ENCODE measurements at regions of chr1 and their contacts with region 1.

Region 1: GRCh38 chr1:173476664-173477285 is 360 bp upstream of the PRDX6 start:
- DNase-seq: peak; percentile 77 to 90 (median 84)
- H3K4me3 ChIP-seq: peak overlapping the region; percentile 93
- H3K4me3 Mint-ChIP-seq: peak overlapping the region; percentile 89 to 94 (median 91)
- H3K27ac ChIP-seq: peak overlapping the region; percentile 89
- H3K27ac Mint-ChIP-seq: peak overlapping the region; percentile 89 to 95 (median 91)
- H3K4me1 ChIP-seq: peaks cover 61% of the 10 kb centered on the region
- H3K4me1 Mint-ChIP-seq: peaks cover 38 to 68% (median 55%) of the 10 kb centered on the region in 4 donors
- H3K27me3 ChIP-seq: no peaks in the 10 kb centered on the region
- H3K27me3 Mint-ChIP-seq: no peaks in the 10 kb centered on the region

Region 2: DNA sequence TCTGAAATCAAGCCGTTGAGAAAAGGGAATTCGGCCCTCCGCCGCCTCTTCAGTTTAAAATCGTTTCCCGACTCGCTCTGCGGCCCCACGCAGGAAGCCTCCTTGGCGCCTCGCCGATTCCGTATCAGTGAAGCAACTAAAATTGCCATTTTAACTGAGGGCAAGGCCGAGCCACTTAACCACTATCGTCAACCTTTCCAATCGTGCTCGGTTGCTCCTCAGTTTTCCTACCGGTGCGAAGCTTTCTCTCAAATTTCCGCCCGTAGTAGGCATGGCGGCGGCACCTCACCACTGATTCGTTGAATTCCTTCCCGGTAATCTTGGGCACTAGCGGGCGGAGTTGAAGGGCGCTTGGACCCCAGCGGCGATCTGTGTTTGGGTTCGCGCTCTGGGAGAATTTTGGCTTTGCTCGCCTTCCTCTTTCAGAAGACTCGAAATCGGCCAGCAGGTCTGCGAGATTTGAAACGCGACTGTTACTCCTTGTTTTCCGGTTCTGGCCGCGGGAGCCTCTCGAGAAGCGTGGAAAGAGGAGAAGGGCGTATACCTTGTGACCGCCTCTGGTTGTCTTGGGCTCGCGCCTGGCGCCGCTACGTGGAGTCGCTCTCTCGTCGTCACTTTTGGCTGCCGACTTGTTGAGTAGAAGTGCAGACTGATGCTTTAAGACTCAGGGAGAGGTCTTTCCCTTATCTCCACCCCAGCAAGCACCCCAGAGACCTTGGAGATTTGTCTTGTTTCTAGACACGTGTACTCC is 347.7 kb after region 1 on chr1 and contains the starts of genes CENPL and DARS2:
- CTCF ChIA-PET with region 1: interaction called, 4 read pairs
- POLR2A ChIA-PET with region 1: interaction called, 20 read pairs
- intact Hi-C with region 1: no loop called
- DNase-seq: peak; percentile 92 to 96 (median 93)
- H3K4me3 ChIP-seq: peak within 1 kb of the TSS; percentile 93 to 95
- H3K4me3 Mint-ChIP-seq: peak within 1 kb of the TSS; percentile 93 to 99 (median 97)
- H3K27ac ChIP-seq: peak within 1 kb of the TSS; percentile 79
- H3K27ac Mint-ChIP-seq: peak within 1 kb of the TSS; percentile 97 to 99 (median 97)
- H3K4me1 ChIP-seq: peaks cover 18% of the 10 kb centered on the region
- H3K4me1 Mint-ChIP-seq: peaks cover 27 to 46% (median 33%) of the 10 kb centered on the region in 4 donors
- H3K27me3 ChIP-seq: no peaks in the 10 kb centered on the region
- H3K27me3 Mint-ChIP-seq: no peaks in the 10 kb centered on the region
- total RNA-seq, gene CENPL: 9.0 to 10.2 TPM
- total RNA-seq, gene DARS2: 13.4 to 13.5 TPM